ENCODE measurements at regions of chr18 and their contacts with region 1.

Region 1: DNA sequence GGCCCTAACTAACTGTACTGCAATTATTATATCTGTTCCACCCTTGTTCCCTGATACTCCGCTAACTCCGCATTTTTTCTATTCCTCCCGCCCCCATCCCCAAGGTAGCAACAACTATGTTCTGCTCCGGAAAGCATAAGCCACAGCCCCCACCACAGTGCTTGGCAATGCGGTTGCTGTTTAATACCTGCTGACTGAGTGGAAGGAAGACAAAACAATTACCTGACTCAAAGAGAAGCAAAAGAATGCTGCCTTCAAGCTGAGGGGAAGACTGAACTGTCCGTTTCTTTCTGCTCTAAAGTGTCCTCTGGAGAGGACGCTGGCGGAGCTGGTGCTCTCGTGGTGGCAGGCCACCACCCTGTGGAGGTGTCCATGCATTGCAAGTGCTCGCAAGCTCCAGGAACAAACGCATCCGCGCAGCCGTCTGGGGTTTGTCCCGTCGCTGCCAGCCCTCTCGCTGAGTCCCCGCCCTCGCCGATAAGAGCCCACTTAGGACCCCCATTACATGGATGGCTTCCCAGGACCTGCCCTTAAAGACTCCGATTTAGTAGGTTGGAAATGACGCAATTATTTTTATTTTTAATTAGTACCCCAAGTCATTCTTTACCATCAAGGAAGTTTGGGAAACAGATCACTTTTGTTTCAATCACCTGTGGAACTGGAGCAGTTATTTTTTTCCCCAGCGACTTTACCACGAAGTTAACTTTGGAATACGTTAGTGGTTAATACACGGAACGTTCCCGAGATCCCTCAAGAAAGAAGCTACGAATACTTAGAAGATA is 1.6 kb upstream of the MYL12A start:
- DNase-seq: peak; percentile 90 to 95
- ATAC-seq: peak; percentile 65 to 73 (median 70)
- H3K4me3 ChIP-seq: peak overlapping the region; percentile 85
- H3K27ac ChIP-seq: peak overlapping the region; percentile 99
- H3K4me1 ChIP-seq: peaks cover 42% of the 10 kb centered on the region
- H3K27me3 ChIP-seq: no peaks in the 10 kb centered on the region
- CTCF ChIP-seq: peak; percentile 97

Region 2: DNA sequence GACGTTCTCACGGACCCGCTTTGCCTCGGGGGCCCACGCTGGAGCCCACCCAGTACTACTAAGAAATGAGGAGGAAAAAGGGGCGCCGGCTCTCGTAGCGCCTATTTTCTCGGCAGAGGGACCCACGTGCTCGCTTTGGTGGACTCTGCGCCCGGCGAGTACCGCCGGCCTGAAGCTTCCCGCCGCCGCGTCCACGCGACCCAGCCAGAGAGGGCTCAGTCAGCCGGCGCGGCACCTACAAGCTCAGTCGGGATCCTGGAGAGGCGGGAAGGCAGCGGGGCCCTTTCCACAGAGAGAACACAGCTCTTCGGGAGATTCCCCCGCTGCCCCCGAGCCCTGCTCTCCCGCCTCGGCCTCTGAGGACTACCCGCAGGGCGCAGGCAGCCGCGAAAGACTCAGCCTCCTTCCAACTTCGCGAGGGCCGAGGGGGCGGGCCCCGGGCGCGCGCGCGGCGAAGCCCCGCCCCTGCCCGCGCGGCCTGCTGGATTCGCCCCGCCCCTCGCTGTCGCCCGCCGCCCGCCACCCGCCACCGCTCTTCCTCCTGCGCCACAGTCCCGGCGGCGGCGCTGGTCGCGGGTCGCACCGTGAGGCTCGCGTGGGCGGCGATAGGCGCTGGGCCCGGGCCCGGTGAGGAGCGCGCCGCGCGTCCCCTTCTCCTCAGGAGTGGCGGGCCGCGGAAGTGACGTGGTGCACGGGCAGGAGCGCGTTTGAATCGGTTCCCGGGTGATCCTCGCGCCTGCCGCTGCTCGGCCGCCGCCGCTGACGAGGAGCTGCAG is 590.7 kb before region 1 on chr18 and contains the start of gene SMCHD1:
- intact Hi-C with region 1: loop called in 1 of 2 experiments (anchors 5 kb)
- DNase-seq: peak; percentile 93 to 96
- ATAC-seq: peak; percentile 88 to 92 (median 91)
- H3K4me3 ChIP-seq: peak within 1 kb of the TSS; percentile 90
- H3K27ac ChIP-seq: peak within 1 kb of the TSS; percentile 96
- H3K4me1 ChIP-seq: peaks cover 22% of the 10 kb centered on the region
- H3K27me3 ChIP-seq: no peaks in the 10 kb centered on the region
- CTCF ChIP-seq: no peak
- total RNA-seq, gene SMCHD1: 20.3 to 23.0 (median 21.6) TPM

Region 3: DNA sequence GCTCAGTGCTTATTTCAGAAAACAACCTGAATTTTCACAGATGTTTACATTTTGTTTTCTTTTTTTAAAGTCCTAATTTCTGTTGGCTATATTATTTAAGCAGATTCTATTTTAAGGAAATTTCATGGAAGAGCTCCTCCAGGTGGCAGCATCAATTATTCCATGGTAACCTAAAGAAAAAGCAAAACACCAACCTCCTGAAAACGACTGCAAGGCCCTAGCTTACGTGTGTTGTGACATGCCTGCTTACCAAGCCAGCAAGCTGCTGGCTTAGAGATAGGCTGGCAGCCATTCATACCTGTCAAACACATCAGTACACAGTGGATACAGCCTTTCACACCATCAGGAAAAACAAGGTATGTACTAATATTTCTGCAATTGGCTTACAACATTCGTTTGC is 298.0 kb before region 1 on chr18:
- intact Hi-C with region 1: loop called in 1 of 2 experiments (anchors 5 kb)
- DNase-seq: no peak
- ATAC-seq: no peak
- H3K4me3 ChIP-seq: no peak overlapping the region
- H3K27ac ChIP-seq: no peak overlapping the region
- H3K4me1 ChIP-seq: no peaks in the 10 kb centered on the region
- H3K27me3 ChIP-seq: no peaks in the 10 kb centered on the region
- CTCF ChIP-seq: no peak

Region 4: GRCh38 chr18:3177902-3178687 is 67.9 kb before region 1 on chr18:
- intact Hi-C with region 1: loop called in 1 of 2 experiments (anchors 5 kb)
- DNase-seq: peak in 1 of 2 donors; percentile 43
- ATAC-seq: peak in 1 of 4 donors; percentile 10
- H3K4me3 ChIP-seq: no peak overlapping the region
- H3K27ac ChIP-seq: peak overlapping the region; percentile 80
- H3K4me1 ChIP-seq: peaks cover 11% of the 10 kb centered on the region
- H3K27me3 ChIP-seq: no peaks in the 10 kb centered on the region
- CTCF ChIP-seq: no peak

Region 5: GRCh38 chr18:3217948-3218647 is 27.9 kb before region 1 on chr18:
- intact Hi-C with region 1: loop called in 1 of 2 experiments (anchors 2 kb)
- DNase-seq: no peak
- ATAC-seq: peak; percentile 66 to 70 (median 70)
- H3K4me3 ChIP-seq: peak overlapping the region; percentile 79
- H3K27ac ChIP-seq: peak overlapping the region; percentile 95
- H3K4me1 ChIP-seq: peaks cover 39% of the 10 kb centered on the region
- H3K27me3 ChIP-seq: no peaks in the 10 kb centered on the region
- CTCF ChIP-seq: no peak

Measured in psoas muscle (tissue), 8 donors.